PC-9 (cell line): ENCODE measurements at regions of chr1 and their contacts with region 1.

Region 1: GRCh38 chr1:112946683-112947082 is 9.3 kb downstream of the SLC16A1 start:
- DNase-seq: no peak
- H3K4me3 ChIP-seq: no peak overlapping the region
- H3K27ac ChIP-seq: no peak overlapping the region
- H3K4me1 ChIP-seq: peaks cover 18% of the 10 kb centered on the region
- H3K27me3 ChIP-seq: no peaks in the 10 kb centered on the region
- CTCF ChIP-seq: no peak

Region 2: GRCh38 chr1:111465754-111466153 is 1480.9 kb before region 1 on chr1:
- CTCF ChIA-PET with region 1: no interaction called
- POLR2A ChIA-PET with region 1: interaction called, 11 read pairs
- intact Hi-C with region 1: no loop called
- DNase-seq: no peak
- H3K4me3 ChIP-seq: no peak overlapping the region
- H3K27ac ChIP-seq: no peak overlapping the region
- H3K4me1 ChIP-seq: 0 out of 2 replicates have a peak, but pooled peaks cover 4% of the 10 kb centered on the region
- H3K27me3 ChIP-seq: no peaks in the 10 kb centered on the region
- CTCF ChIP-seq: no peak

Region 3: GRCh38 chr1:112369392-112370285 is 577.0 kb before region 1 on chr1:
- CTCF ChIA-PET with region 1: no interaction called
- POLR2A ChIA-PET with region 1: no interaction called
- intact Hi-C with region 1: no loop called
- DNase-seq: peak; percentile 67 to 88
- H3K4me3 ChIP-seq: no peak overlapping the region
- H3K27ac ChIP-seq: no peak overlapping the region
- H3K4me1 ChIP-seq: no peaks in the 10 kb centered on the region
- H3K27me3 ChIP-seq: peaks cover 55% of the 10 kb centered on the region
- CTCF ChIP-seq: peak; percentile 99